ENCODE measurements at regions of chr5 and their contacts with region 1.

Region 1: GRCh38 chr5:39217365-39218281 is 1.7 kb downstream of the FYB1 start:
- DNase-seq: peak; percentile 51
- H3K4me3 ChIP-seq: peak overlapping the region in 1 of 2 experiments; percentile 32; a peak in 1 of 4 replicates
- H3K27ac ChIP-seq: no peak overlapping the region
- H3K4me1 ChIP-seq: no peaks in the 10 kb centered on the region
- H3K27me3 ChIP-seq: peaks cover 50% of the 10 kb centered on the region
- CTCF ChIP-seq: peak; percentile 93
- EP300 ChIP-seq: no peak
- RAD21 ChIP-seq: peak; percentile 74

Region 2: DNA sequence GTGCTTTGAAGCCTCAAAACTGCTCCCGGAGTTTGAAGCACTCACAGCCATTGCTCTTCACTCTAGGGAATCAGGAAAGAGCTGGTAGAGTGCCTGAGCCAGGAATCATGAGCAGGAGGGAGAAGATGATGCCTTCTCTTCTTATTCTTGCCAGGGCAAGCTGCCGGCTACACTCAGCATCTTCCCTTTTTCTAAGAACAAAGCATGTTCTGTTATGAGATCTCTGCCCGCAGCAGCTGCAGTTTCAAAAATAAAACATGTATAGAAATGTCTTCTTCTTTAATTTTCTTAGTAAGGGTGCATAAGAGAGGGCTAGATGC is 85.5 kb before region 1 on chr5:
- CTCF ChIA-PET with region 1: no interaction called
- POLR2A ChIA-PET with region 1: no interaction called
- DNase-seq: no peak
- H3K4me3 ChIP-seq: no peak overlapping the region
- H3K27ac ChIP-seq: no peak overlapping the region
- H3K4me1 ChIP-seq: no peaks in the 10 kb centered on the region
- H3K27me3 ChIP-seq: peaks cover 36% of the 10 kb centered on the region; the same call in 1 of the 2 replicates
- CTCF ChIP-seq: no peak
- EP300 ChIP-seq: no peak
- RAD21 ChIP-seq: no peak

Region 3: DNA sequence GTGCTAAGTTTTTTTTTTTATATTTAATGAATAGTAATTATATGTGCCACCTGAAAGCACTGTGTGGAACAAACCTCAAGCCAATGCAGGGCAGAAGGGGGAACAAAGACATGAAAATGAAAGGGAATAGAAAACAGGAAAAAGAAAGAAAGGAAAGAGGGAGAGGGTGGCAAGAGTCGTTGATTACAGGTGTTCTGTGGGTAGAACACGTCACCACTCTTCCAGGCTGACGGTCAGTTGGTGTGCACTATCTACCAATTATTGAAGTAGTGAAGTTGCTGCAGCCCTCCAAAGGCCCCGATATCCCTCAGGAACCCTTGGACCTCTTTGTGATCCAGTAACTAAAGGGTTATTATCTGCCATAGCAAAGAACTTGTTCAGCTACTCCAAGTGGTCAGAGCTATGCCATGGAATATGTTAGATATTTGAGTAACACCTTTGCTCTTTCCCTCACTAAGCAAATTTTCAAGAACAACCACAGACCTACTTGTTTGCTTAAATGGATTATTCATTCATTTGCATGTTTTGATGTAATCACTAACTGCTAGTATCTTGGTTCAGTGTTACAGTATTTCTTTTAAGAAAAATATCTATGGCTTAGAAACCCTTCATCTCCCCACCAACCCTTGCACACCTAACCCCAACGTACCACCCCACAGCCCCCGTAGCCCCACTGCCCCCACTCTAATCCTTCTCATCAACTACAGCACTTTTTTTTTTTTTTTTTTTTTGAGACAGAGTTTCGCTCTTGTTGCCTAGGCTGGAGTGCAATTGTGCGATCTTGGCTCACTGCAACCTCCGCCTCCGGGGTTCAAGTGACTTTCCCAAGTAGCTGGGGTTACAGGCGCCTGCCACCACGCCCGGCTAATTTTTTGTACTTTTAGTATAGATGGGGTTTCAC is 29.5 kb before region 1 on chr5:
- CTCF ChIA-PET with region 1: interaction called, 14 read pairs
- POLR2A ChIA-PET with region 1: no interaction called
- DNase-seq: no peak
- H3K4me3 ChIP-seq: no peak overlapping the region
- H3K27ac ChIP-seq: no peak overlapping the region
- H3K4me1 ChIP-seq: no peaks in the 10 kb centered on the region
- H3K27me3 ChIP-seq: peaks cover 52% of the 10 kb centered on the region; the same call in 1 of the 2 replicates
- CTCF ChIP-seq: no peak
- EP300 ChIP-seq: no peak
- RAD21 ChIP-seq: no peak

Region 4: GRCh38 chr5:39194466-39195136 is 23.0 kb before region 1 on chr5:
- CTCF ChIA-PET with region 1: interaction called, 11 read pairs
- POLR2A ChIA-PET with region 1: no interaction called
- DNase-seq: no peak
- H3K4me3 ChIP-seq: no peak overlapping the region
- H3K27ac ChIP-seq: no peak overlapping the region
- H3K4me1 ChIP-seq: no peaks in the 10 kb centered on the region
- H3K27me3 ChIP-seq: peaks cover 68% of the 10 kb centered on the region
- CTCF ChIP-seq: no peak
- EP300 ChIP-seq: no peak
- RAD21 ChIP-seq: no peak

Region 5: GRCh38 chr5:39231705-39232525 is 14.3 kb after region 1 on chr5:
- CTCF ChIA-PET with region 1: interaction called, 49 read pairs
- POLR2A ChIA-PET with region 1: no interaction called
- DNase-seq: no peak
- H3K4me3 ChIP-seq: no peak overlapping the region; a peak in 1 of 4 replicates
- H3K27ac ChIP-seq: no peak overlapping the region
- H3K4me1 ChIP-seq: no peaks in the 10 kb centered on the region
- H3K27me3 ChIP-seq: no peaks in the 10 kb centered on the region; the same call in 1 of the 2 replicates
- CTCF ChIP-seq: no peak
- EP300 ChIP-seq: no peak
- RAD21 ChIP-seq: no peak

Region 6: GRCh38 chr5:39249564-39250274 is 32.1 kb after region 1 on chr5:
- CTCF ChIA-PET with region 1: interaction called, 10 read pairs
- POLR2A ChIA-PET with region 1: no interaction called
- DNase-seq: no peak
- H3K4me3 ChIP-seq: no peak overlapping the region
- H3K27ac ChIP-seq: no peak overlapping the region
- H3K4me1 ChIP-seq: no peaks in the 10 kb centered on the region
- H3K27me3 ChIP-seq: peaks cover 17% of the 10 kb centered on the region; the same call in 1 of the 2 replicates
- CTCF ChIP-seq: no peak
- EP300 ChIP-seq: no peak
- RAD21 ChIP-seq: no peak

Region 7: GRCh38 chr5:39283231-39283818 is 65.7 kb after region 1 on chr5:
- CTCF ChIA-PET with region 1: interaction called, 15 read pairs
- POLR2A ChIA-PET with region 1: no interaction called
- DNase-seq: no peak
- H3K4me3 ChIP-seq: no peak overlapping the region; a peak in 1 of 4 replicates
- H3K27ac ChIP-seq: no peak overlapping the region
- H3K4me1 ChIP-seq: no peaks in the 10 kb centered on the region
- H3K27me3 ChIP-seq: peaks cover 18% of the 10 kb centered on the region; the same call in 1 of the 2 replicates
- CTCF ChIP-seq: peak; percentile 58
- EP300 ChIP-seq: no peak
- RAD21 ChIP-seq: peak; percentile 60

Region 8: DNA sequence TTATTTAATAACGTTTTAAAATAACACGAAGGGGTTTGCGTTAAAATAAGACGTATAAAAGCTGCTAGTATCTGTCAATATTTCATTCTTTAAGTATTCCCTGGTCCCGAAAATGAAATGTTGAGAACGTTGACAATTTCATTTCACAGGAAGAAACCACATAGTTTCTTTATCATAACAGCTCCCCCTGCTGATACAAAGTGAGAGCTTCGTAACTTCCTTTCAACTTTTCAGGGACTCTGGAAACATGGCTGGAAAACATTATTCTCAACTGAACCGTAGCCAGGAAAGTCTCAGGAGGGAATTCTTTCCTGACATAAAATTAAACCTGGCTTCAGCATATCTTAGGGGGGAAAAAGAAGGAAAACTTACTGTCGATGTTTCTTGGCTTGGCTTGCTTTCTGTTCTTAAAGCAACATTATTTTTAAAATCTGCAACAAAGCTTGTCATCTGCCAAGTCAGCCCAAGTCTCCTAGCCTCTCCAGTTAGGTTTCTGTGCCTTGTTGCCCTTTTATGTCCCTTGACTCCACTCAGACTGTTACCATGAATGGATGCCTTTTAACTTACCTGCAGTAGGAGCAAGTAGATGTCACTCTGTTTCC is 330.0 kb after region 1 on chr5:
- CTCF ChIA-PET with region 1: interaction called, 20 read pairs
- POLR2A ChIA-PET with region 1: no interaction called
- DNase-seq: peak; percentile 14
- H3K4me3 ChIP-seq: no peak overlapping the region; a peak in 1 of 4 replicates
- H3K27ac ChIP-seq: no peak overlapping the region
- H3K4me1 ChIP-seq: peaks cover 0 to 10% of the 10 kb centered on the region in 2 experiments; a peak in 1 of 4 replicates
- H3K27me3 ChIP-seq: no peaks in the 10 kb centered on the region
- CTCF ChIP-seq: peak; percentile 86
- EP300 ChIP-seq: no peak
- RAD21 ChIP-seq: peak; percentile 68

Measured in SK-N-SH (cell line).